CD8-positive, alpha-beta T cell (primary cell): ENCODE measurements at regions of chr1 and their contacts with region 1.

Region 1: GRCh38 chr1:201108614-201109013 is 3.6 kb downstream of the CACNA1S start:
- DNase-seq: no peak
- ATAC-seq: no peak
- H3K4me3 ChIP-seq: no peak overlapping the region
- H3K4me3 Mint-ChIP-seq: no peak overlapping the region
- H3K27ac ChIP-seq: no peak overlapping the region
- H3K27ac Mint-ChIP-seq: no peak overlapping the region
- H3K4me1 ChIP-seq: peaks cover 1% of the 10 kb centered on the region
- H3K4me1 Mint-ChIP-seq: peaks cover 6% of the 10 kb centered on the region
- H3K27me3 ChIP-seq: no peaks in the 10 kb centered on the region
- H3K27me3 Mint-ChIP-seq: no peaks in the 10 kb centered on the region
- CTCF ChIP-seq: no peak

Region 2: GRCh38 chr1:201119206-201120197 is 10.9 kb after region 1 on chr1:
- CTCF ChIA-PET with region 1: interaction called, 10 read pairs
- POLR2A ChIA-PET with region 1: no interaction called
- intact Hi-C with region 1: no loop called
- DNase-seq: peak; percentile 17 to 73 (median 54)
- ATAC-seq: peak; percentile 44
- H3K4me3 ChIP-seq: no peak overlapping the region
- H3K4me3 Mint-ChIP-seq: no peak overlapping the region
- H3K27ac ChIP-seq: no peak overlapping the region
- H3K27ac Mint-ChIP-seq: no peak overlapping the region
- H3K4me1 ChIP-seq: peaks cover 13% of the 10 kb centered on the region
- H3K4me1 Mint-ChIP-seq: peaks cover 25% of the 10 kb centered on the region
- H3K27me3 ChIP-seq: no peaks in the 10 kb centered on the region
- H3K27me3 Mint-ChIP-seq: peaks cover 8% of the 10 kb centered on the region
- CTCF ChIP-seq: peak; percentile 64

Region 3: DNA sequence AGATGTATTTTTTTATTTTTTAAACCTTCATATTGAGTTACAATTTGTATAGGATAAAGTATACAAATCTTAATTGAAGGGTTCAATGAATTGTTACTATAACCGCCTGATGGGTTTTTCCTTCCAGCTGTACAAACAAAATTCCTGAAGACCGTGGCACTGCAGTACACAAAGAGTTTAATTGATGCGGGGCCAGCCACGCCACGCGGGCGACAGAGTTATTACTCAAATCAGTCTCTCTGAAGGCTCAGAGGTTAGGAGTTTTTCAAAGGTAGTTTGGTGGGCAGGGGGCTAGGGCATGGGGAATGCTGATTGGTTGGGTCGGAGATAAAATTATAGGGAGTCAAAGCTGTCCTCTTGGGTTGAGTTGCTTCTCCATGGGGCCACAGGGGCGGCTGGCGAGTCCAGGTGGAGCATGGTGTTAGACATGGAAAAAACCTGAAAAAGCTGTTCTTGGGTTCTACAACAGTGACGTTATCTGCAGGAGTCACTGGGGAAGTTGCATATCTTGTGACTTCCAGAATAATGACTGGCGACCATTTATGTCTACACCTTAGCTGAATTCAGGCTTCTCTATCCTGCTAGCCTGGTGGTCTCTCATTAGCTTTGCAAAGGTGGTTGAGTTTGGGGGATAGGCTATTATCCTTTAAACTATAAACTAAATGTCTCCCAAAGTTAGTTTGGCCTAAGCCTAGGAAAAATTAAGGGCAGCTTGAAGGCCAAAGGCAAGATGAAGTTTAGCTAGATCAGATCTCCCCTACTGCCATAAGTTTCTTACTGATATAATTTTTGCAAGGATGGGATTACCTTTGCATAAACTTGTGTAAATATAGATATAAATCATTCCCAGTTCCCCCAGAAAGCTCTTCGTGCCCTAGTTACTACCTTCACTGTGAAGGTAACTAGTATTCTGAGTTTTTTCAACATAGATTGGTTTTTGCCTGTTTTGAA is 58.7 kb after region 1 on chr1:
- CTCF ChIA-PET with region 1: no interaction called
- POLR2A ChIA-PET with region 1: no interaction called
- intact Hi-C with region 1: no loop called
- DNase-seq: no peak
- ATAC-seq: no peak
- H3K4me3 ChIP-seq: no peak overlapping the region
- H3K4me3 Mint-ChIP-seq: no peak overlapping the region
- H3K27ac ChIP-seq: no peak overlapping the region
- H3K27ac Mint-ChIP-seq: no peak overlapping the region
- H3K4me1 ChIP-seq: peaks cover 11% of the 10 kb centered on the region
- H3K4me1 Mint-ChIP-seq: peaks cover 13% of the 10 kb centered on the region
- H3K27me3 ChIP-seq: no peaks in the 10 kb centered on the region
- H3K27me3 Mint-ChIP-seq: peaks cover 5% of the 10 kb centered on the region
- CTCF ChIP-seq: no peak

Region 4: DNA sequence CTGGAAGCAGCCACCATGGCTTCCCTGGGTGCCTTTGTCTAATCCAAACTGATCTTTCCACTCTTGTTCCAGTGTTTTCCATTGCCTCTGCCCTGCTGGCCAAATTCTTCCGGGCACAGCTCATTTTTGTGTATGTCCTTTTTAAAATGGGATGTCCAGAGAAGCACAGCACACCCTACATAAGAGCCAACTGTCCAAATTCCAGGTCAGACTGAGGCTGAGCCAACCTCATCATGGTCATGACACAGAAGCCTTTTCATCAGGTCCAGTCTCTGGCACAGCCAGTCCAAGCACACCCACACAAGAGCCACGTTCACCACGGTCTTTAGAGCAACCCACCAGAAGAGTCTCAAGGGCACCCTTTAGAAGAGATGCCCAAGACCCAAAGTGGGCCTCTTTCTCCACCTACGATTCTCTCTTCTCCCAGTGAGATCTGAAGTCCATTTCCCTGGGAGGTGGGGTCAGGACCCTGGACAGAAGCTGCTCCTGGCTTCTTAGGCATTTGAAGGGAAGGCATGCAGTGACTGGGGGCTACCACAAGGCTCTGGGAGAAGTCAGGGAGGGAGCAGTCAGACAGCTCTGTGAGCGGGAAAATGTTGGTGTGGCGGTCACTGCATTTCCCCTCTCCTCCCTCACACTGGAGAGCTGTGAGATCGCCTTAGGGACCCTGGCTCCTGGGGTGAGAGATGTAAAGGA is 1548.5 kb after region 1 on chr1:
- CTCF ChIA-PET with region 1: no interaction called
- POLR2A ChIA-PET with region 1: no interaction called
- intact Hi-C with region 1: no loop called
- DNase-seq: no peak
- ATAC-seq: no peak
- H3K4me3 ChIP-seq: no peak overlapping the region
- H3K4me3 Mint-ChIP-seq: no peak overlapping the region
- H3K27ac ChIP-seq: no peak overlapping the region
- H3K27ac Mint-ChIP-seq: no peak overlapping the region
- H3K4me1 ChIP-seq: no peaks in the 10 kb centered on the region
- H3K4me1 Mint-ChIP-seq: no peaks in the 10 kb centered on the region
- H3K27me3 ChIP-seq: no peaks in the 10 kb centered on the region
- H3K27me3 Mint-ChIP-seq: peaks cover 32% of the 10 kb centered on the region
- CTCF ChIP-seq: no peak